ENCODE measurements at regions of chr3 and their contacts with region 1.

Region 1: DNA sequence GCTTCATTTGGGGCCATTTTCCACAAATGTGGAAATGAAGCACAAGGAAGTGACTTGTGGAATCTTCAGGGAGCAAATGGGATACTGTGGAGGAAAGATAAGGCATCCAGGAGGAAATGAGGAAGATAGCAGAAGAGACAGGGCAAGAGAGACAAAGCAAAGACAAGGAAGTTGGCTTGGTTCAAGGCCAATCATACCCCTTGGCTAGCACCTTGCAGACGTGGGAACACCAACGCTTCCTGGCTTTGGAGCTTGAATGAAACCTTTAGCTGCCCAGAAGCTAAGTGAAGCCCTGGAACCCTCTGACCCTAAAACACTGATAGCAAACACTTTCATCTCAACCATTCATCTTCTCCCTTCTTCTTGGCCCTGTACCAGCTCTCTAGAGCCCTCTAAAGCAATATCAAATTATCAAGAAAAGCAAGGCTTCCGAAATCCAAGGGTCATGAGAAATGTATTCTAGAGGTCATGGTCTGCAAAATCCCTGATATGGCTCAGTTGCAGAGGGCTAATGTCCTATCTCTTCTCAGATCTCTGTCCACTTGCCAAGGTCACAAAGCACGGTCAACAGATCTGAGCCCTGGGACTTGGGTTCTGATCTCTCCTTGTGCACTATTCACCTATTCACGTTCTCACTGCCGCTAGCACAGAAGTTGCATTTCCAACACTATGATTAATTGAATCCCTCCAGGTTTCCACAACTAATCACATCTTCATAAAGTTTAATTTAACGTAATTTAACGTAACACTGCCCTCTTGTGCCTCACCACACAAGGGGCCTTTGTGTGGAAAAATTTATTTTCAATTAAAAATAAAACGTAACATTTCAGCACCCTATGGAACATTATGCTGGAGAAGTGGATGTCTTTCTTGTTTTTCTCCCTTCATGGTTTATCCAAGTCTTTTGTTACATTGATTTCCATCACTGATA is 557.6 kb upstream of the ADAMTS9 start:
- DNase-seq: no peak
- H3K4me3 ChIP-seq: no peak overlapping the region
- H3K27ac ChIP-seq: no peak overlapping the region
- H3K4me1 ChIP-seq: no peaks in the 10 kb centered on the region
- H3K27me3 ChIP-seq: no peaks in the 10 kb centered on the region
- CTCF ChIP-seq: peak in 2 of 3 experiments; percentile 27 to 52
- POLR2A ChIP-seq: no peak

Region 2: DNA sequence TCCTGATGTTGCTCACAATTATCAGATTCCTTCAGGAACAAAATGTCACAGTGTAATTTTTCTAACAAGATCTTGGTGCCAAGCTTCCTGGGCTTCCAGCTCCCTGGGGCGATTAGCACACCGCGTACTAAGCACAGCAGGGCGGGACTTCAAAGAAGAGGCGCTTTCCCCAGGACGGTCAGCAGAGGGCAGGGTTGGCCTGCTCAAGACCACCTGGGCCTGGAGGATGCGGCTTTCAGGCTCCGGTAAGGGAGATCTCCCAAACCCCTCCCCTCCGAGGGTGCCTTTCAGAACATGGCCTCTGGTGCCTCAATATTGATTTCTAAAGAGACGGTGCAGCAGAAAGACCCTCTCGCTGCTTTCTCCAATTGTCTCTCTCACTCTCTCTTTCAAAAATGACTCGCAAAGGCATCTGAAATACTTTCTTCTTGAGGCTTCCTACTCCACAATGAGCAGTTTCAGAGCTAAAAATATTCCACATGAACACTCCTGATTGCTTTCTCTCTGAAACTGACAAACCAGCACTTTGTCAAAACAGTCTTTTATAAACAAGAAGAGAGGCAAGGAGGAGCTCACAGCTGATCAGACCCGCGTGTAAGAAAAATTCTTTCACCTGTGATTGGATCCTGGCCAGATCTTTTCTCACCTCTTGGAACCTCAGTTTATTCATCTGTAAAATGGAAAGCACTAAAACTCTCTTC is 711.6 kb before region 1 on chr3:
- intact Hi-C with region 1: loop called (anchors 5 kb)
- DNase-seq: peak in 1 of 2 donors; percentile 94
- H3K4me3 ChIP-seq: no peak overlapping the region
- H3K27ac ChIP-seq: peak overlapping the region; percentile 54
- H3K4me1 ChIP-seq: peaks cover 16% of the 10 kb centered on the region
- H3K27me3 ChIP-seq: no peaks in the 10 kb centered on the region
- CTCF ChIP-seq: peak; percentile 86 to 90 (median 88)
- POLR2A ChIP-seq: no peak

Region 3: DNA sequence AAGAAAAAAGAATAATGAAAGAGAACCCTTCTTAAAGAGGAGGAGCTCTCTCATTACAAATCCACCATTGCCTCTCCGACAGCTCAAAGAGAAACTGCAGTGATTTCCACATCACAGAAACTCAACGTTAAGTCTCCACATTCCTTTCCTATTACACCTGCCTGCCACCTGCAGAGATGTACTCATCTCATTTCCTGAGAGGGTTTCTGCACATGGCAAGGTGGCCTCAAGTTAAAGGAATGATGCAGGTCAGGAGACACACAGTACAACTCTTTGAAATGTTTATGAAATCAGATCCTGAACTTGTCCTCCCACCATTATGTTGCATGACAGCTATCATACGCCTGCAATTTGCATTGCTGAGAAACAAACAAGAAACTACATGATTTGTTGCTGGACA is 99.2 kb before region 1 on chr3:
- intact Hi-C with region 1: no loop called
- DNase-seq: no peak
- H3K4me3 ChIP-seq: no peak overlapping the region
- H3K27ac ChIP-seq: no peak overlapping the region
- H3K4me1 ChIP-seq: no peaks in the 10 kb centered on the region
- H3K27me3 ChIP-seq: no peaks in the 10 kb centered on the region
- CTCF ChIP-seq: no peak
- POLR2A ChIP-seq: no peak